ENCODE measurements at regions of chr21 and their contacts with region 1.

Region 1: DNA sequence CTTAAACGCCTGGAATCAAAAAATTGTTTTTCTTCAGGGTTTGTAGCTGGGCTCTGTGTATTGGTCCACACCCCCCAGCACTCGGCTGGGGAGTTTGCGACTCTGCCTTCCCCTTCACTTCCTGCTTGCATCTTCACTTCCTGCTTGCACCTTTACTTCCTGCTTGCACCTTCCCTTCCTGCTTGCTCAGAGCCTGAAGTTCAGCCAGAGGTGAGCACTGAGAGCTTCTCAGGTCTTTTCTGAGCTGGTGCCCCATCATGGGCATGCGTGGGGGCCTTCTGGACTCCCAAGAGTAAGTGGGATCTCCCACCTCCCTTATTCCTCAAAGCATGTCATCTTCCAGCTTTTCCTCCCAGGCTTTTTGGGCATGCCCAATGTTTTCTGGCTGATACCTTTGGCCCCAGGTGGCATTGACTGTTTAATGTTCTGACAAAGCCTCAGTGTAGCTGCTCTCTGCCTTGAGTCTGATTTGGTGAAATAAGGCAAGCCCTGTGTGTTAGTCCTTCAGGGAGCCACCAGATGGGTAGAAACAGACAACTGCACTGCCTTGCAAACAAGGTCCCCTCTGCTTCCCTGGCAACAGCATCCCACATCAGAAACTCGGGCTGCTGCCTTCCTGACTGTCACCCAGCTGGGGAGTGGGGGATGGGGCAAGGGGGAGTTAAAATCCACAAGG is 3.5 kb downstream of the KRTAP10-2 start:
- DNase-seq: no peak
- H3K4me3 ChIP-seq: no peak overlapping the region
- H3K27ac ChIP-seq: no peak overlapping the region
- H3K4me1 ChIP-seq: no peaks in the 10 kb centered on the region
- H3K27me3 ChIP-seq: no peaks in the 10 kb centered on the region
- CTCF ChIP-seq: no peak

Region 2: GRCh38 chr21:42574234-42575027 is 1973.4 kb before region 1 on chr21:
- CTCF ChIA-PET with region 1: no interaction called
- POLR2A ChIA-PET with region 1: no interaction called
- intact Hi-C with region 1: no loop called
- DNase-seq: no peak
- H3K4me3 ChIP-seq: no peak overlapping the region
- H3K27ac ChIP-seq: no peak overlapping the region
- H3K4me1 ChIP-seq: no peaks in the 10 kb centered on the region
- H3K27me3 ChIP-seq: no peaks in the 10 kb centered on the region
- CTCF ChIP-seq: no peak

Region 3: DNA sequence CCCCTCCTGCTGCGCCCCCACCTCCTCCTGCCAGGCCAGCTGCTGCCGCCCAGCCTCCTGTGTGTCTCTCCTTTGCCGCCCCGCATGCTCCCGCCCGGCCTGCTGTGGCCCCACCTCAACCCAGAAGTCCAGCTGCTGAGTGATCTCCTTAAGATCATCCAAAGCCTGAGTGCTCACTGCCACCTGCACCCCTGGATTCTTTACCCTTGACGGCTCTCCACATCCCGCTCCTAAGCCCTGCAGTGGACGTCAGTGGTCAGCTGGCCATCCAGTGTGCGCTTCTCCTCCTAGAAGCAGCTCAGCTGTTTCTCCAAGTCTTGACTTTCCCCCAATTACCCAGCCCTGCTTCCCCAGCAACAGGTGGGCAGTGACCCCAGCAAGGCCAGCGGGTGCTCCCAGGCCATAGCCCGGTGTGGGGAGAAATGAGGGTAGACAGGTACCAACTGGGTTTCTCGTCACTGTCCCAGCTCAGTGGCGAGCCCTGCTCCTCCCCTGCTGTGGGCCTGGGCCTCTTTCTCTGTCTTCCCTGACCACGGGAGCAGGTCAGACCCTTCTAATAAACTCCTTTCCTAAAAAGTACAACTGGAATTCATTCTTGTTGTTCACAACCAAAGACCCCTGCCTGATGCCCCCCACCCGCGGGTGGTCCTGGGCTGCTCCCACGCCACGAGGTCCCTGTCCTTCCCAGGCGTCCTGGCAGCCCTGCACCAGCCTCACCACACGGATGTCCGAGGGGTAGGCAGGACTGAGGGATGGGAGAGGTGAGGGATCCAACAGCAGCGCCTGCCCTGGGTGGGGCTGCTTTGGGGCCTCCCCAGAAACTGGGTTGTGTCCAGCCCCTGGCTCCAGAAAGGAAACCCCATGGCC is 54.0 kb after region 1 on chr21:
- CTCF ChIA-PET with region 1: no interaction called
- POLR2A ChIA-PET with region 1: no interaction called
- intact Hi-C with region 1: loop called (anchors 10 kb)
- DNase-seq: no peak
- H3K4me3 ChIP-seq: no peak overlapping the region
- H3K27ac ChIP-seq: no peak overlapping the region
- H3K4me1 ChIP-seq: no peaks in the 10 kb centered on the region
- H3K27me3 ChIP-seq: no peaks in the 10 kb centered on the region
- CTCF ChIP-seq: no peak

Measured in A673 (cell line).